CD8-positive, alpha-beta T cell (primary cell): ENCODE measurements at regions of chr6 and their contacts with region 1.

Region 1: GRCh38 chr6:143026696-143027449 is 33.8 kb upstream of the AIG1 start:
- DNase-seq: peak; percentile 10 to 68 (median 55)
- ATAC-seq: peak; percentile 67
- H3K4me3 ChIP-seq: no peak overlapping the region
- H3K4me3 Mint-ChIP-seq: no peak overlapping the region
- H3K27ac ChIP-seq: no peak overlapping the region
- H3K27ac Mint-ChIP-seq: no peak overlapping the region
- H3K4me1 ChIP-seq: no peaks in the 10 kb centered on the region
- H3K4me1 Mint-ChIP-seq: no peaks in the 10 kb centered on the region
- H3K27me3 ChIP-seq: no peaks in the 10 kb centered on the region
- H3K27me3 Mint-ChIP-seq: no peaks in the 10 kb centered on the region
- CTCF ChIP-seq: peak; percentile 62

Region 2: GRCh38 chr6:142566628-142567396 is 460.1 kb before region 1 on chr6:
- CTCF ChIA-PET with region 1: interaction called, 3 read pairs
- POLR2A ChIA-PET with region 1: no interaction called
- intact Hi-C with region 1: loop called (anchors 1 to 2 kb)
- DNase-seq: peak; percentile 22 to 72 (median 58)
- ATAC-seq: peak; percentile 57
- H3K4me3 ChIP-seq: no peak overlapping the region
- H3K4me3 Mint-ChIP-seq: no peak overlapping the region
- H3K27ac ChIP-seq: no peak overlapping the region
- H3K27ac Mint-ChIP-seq: no peak overlapping the region
- H3K4me1 ChIP-seq: peaks cover 47% of the 10 kb centered on the region
- H3K4me1 Mint-ChIP-seq: peaks cover 61% of the 10 kb centered on the region
- H3K27me3 ChIP-seq: no peaks in the 10 kb centered on the region
- H3K27me3 Mint-ChIP-seq: no peaks in the 10 kb centered on the region
- CTCF ChIP-seq: peak; percentile 75

Region 3: GRCh38 chr6:142746524-142746923 is 280.3 kb before region 1 on chr6:
- CTCF ChIA-PET with region 1: interaction called, 4 read pairs
- POLR2A ChIA-PET with region 1: no interaction called
- intact Hi-C with region 1: loop called (anchors 5 kb)
- DNase-seq: peak in 8 of 9 experiments; percentile 6 to 71 (median 39)
- ATAC-seq: peak; percentile 58
- H3K4me3 ChIP-seq: no peak overlapping the region
- H3K4me3 Mint-ChIP-seq: no peak overlapping the region
- H3K27ac ChIP-seq: no peak overlapping the region
- H3K27ac Mint-ChIP-seq: no peak overlapping the region
- H3K4me1 ChIP-seq: peaks cover 6% of the 10 kb centered on the region
- H3K4me1 Mint-ChIP-seq: peaks cover 15% of the 10 kb centered on the region
- H3K27me3 ChIP-seq: no peaks in the 10 kb centered on the region
- H3K27me3 Mint-ChIP-seq: no peaks in the 10 kb centered on the region
- CTCF ChIP-seq: peak; percentile 42

Region 4: GRCh38 chr6:142893075-142893474 is 133.8 kb before region 1 on chr6:
- CTCF ChIA-PET with region 1: interaction called, 4 read pairs
- POLR2A ChIA-PET with region 1: no interaction called
- intact Hi-C with region 1: loop called in 1 of 2 experiments (anchors 10 kb)
- DNase-seq: no peak
- ATAC-seq: no peak
- H3K4me3 ChIP-seq: no peak overlapping the region
- H3K4me3 Mint-ChIP-seq: no peak overlapping the region
- H3K27ac ChIP-seq: no peak overlapping the region
- H3K27ac Mint-ChIP-seq: peak overlapping the region; percentile 43
- H3K4me1 ChIP-seq: peaks cover 60% of the 10 kb centered on the region
- H3K4me1 Mint-ChIP-seq: peaks cover 69% of the 10 kb centered on the region
- H3K27me3 ChIP-seq: no peaks in the 10 kb centered on the region
- H3K27me3 Mint-ChIP-seq: no peaks in the 10 kb centered on the region
- CTCF ChIP-seq: no peak

Region 5: DNA sequence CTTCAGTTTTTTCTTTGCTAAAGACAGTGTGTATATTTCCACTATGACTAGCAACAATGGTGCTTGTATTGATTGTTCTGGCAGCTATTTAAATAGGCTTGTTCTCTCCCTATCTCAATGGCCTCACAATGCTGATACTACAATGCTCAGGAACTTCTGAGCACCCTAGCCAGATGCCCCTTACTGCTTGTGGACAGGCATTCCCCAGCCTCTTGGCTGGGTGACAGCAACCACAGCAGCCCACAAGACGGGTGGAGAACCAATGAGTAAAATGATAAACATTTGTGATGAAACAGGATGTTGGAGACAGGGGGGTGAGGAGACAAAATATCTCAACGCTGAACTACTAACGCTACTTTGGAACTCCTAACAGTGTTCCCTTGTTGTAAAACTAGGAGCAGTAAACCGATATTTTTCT is 124.2 kb before region 1 on chr6:
- CTCF ChIA-PET with region 1: interaction called, 4 read pairs
- POLR2A ChIA-PET with region 1: no interaction called
- intact Hi-C with region 1: loop called (anchors 10 kb)
- DNase-seq: peak; percentile 53 to 95 (median 81)
- ATAC-seq: peak; percentile 58
- H3K4me3 ChIP-seq: peak overlapping the region; percentile 1 to 33
- H3K4me3 Mint-ChIP-seq: peak overlapping the region; percentile 70
- H3K27ac ChIP-seq: peak overlapping the region; percentile 82 to 87
- H3K27ac Mint-ChIP-seq: peak overlapping the region; percentile 98
- H3K4me1 ChIP-seq: peaks cover 91% of the 10 kb centered on the region
- H3K4me1 Mint-ChIP-seq: peaks cover 63% of the 10 kb centered on the region
- H3K27me3 ChIP-seq: no peaks in the 10 kb centered on the region
- H3K27me3 Mint-ChIP-seq: no peaks in the 10 kb centered on the region
- CTCF ChIP-seq: no peak